ENCODE measurements at regions of chr5 and their contacts with region 1.

Region 1: DNA sequence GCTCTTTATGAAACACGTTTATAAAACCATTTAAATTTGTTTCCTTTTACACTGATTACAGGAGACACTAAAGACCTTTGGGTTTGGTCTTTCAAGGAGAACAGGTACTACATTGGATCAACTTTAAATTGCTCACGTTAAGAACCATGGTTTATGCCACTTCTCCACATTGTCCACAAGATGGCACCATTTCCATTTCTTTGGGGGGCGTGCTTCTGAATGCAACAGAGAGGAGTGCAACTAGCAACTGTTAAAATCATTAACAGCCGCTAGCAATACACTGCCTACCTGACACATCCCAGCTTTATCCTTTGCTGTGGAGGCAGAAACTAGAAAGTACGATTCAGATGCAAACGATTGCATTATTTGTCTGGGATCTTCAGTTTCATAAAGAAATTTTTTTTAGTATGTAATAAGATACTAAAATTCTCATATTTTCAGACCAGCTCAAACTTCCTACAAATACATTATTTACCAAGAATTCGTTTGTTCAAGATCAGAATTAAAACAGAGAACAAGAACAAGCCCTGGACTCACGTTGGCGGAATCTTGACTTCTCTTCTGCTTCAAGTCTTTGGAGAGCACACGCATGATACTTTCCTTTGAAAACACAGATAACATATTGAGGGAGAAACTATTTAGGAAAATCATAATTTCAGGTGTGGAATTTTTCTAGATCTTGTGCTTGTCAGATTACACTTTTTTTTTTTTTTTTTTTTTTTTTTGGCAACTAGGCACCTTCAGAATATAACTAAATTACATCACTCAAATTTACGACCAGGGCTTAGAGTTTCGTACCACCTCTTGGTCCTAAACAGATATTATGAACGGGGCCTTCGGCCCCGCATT is 702 bp downstream of the CDC20B start:
- DNase-seq: peak; percentile 56

Region 2: DNA sequence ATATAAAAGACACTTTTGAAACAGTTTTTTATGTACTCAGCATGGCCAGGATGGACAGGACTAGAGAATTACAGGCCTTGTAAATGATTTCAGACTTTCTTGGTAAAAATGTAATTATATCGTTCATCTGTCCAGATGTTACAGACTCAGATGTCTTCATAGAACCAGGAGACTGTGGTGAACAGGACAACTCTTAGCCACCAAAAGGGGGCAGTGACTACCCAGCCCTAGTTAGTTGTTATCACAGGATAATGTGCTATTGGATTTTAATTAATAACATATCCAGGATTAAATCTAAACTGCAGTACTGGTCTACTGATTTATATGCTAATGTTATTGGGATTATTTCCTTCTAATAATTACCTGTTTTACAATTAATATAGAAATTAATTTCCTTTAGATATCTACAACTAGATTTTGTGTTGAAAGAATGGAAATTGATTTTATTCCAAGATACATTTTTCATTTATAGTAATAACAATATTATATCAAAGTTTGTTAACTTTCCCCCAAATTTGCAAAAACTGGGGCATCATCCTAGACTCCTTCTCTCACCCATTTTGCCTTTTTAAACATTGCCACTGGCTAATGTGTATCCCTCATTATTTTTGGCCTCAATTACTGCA is 234.9 kb after region 1 on chr5:
- in situ Hi-C with region 1: loop called (anchors 10 kb)
- DNase-seq: no peak

Measured in Caki2 (cell line).